Spleen (tissue), 13 donors: ENCODE measurements at regions of chr10 and their contacts with region 1.

Region 1: GRCh38 chr10:68526626-68527307 is 556 bp downstream of the SLC25A16 start:
- DNase-seq: no peak
- H3K4me3 ChIP-seq: peak overlapping the region; percentile 60 to 98 (median 89)
- H3K27ac ChIP-seq: peak overlapping the region; percentile 82 to 96 (median 94)
- H3K4me1 ChIP-seq: peaks cover 5 to 43% (median 18%) of the 10 kb centered on the region in 6 donors
- H3K27me3 ChIP-seq: no peaks in the 10 kb centered on the region
- CTCF ChIP-seq: no peak
- POLR2A ChIP-seq: no peak

Region 2: DNA sequence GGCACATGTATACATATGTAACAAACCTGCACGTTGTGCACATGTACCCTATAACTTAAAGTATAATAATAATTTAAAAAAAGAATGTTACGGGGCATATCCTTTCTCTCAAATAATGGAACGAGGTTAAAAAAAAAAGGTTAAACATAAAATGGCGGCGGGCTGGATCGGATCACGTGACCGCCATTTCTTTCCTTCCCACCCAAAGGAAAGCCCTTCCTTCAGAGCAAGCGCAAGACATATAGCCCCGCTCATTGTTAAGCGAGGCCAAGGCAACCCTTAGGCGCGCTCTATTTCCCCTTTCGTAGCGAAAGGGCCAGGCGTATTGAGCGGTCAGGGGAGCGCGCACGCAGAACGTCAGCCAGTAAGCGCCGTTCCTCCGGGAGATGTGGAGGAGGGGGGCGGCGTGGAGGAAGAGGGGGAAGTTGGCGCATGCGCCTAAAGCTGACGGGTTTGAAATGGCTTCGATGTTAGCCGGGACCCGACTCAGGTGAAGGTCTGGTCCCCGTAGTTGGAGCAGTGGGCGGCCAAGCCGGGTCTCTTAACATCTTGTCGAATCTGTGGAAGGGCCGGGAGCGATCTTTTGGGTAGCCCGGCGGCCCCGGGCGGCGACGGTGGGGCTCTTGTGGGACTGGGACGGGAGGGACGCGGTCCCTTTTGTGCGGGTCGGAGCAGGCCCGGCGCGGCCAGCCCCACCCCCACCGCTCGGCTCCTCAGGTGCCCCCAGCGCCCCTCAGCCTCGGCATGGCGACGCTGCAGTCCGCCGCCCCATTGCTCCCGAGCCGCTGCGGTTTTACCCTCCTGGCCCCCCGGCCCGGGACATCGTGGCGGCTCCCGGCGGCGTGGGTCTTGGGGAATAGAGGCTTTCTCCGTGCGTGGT is 194.3 kb after region 1 on chr10 and contains the start of gene CCAR1:
- intact Hi-C with region 1: loop called (anchors 10 kb)
- DNase-seq: peak; percentile 99
- H3K4me3 ChIP-seq: peak within 1 kb of the TSS; percentile 82 to 99 (median 93)
- H3K27ac ChIP-seq: peak within 1 kb of the TSS; percentile 85 to 96 (median 94)
- H3K4me1 ChIP-seq: peaks cover 10 to 25% (median 14%) of the 10 kb centered on the region in 6 donors
- H3K27me3 ChIP-seq: no peaks in the 10 kb centered on the region
- CTCF ChIP-seq: peak in 2 of 11 experiments; percentile 16 to 22
- POLR2A ChIP-seq: peak in 1 of 3 donors; percentile 70
- total RNA-seq, gene CCAR1: 57.5 to 83.6 (median 65.7) TPM